ENCODE measurements at regions of chr1 and their contacts with region 1.

Region 1: DNA sequence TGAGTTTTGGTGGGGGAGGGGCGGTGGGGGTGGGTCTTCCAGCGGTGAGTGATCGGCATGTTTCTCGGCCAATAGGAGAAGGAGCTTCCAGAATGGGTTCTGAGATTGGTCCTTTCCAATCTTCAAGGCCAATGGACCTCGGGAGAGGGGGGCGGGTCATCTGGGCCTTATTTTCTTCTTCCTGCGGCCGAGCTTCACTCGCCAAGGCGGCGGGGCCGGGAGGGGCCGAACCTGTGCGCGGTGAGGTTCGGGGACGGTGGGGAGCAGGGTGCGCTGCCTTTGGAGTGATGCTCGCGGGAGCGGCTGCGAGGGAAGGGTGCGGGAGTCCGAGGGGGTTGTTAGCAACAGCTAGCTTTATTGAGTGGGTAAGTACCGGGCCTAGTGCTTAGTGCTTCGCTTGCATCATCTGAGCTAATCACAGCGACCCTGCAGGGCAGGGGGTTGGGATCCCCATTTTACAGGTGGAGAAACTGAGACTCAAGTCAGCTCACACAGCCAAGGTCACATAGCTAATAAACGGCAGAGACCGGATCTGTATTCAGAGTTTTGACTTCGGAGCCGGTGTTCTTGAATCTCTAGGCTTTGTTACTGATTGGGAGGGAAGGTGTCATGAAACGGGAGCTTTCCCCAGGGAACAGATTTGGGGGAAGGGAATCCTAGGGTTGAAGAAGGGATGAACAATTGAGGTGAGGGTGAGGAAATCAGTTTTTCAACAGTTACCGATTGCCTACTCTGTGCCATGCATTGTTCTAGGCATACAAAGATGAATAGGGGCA is 549 bp downstream of the KDM4A start:
- DNase-seq: peak; percentile 95
- ATAC-seq: peak; percentile 81
- H3K4me3 Mint-ChIP-seq: peak overlapping the region; percentile 89
- H3K27ac Mint-ChIP-seq: peak overlapping the region; percentile 97
- H3K4me1 Mint-ChIP-seq: peaks cover 31% of the 10 kb centered on the region
- H3K27me3 Mint-ChIP-seq: no peaks in the 10 kb centered on the region

Region 2: GRCh38 chr1:43454266-43455011 is 196.1 kb before region 1 on chr1:
- CTCF ChIA-PET with region 1: no interaction called
- POLR2A ChIA-PET with region 1: interaction called, 5 read pairs
- intact Hi-C with region 1: loop called in 1 of 2 experiments (anchors 5 kb)
- DNase-seq: peak; percentile 78
- ATAC-seq: peak; percentile 92
- H3K4me3 Mint-ChIP-seq: peak overlapping the region; percentile 79
- H3K27ac Mint-ChIP-seq: peak overlapping the region; percentile 79
- H3K4me1 Mint-ChIP-seq: peaks cover 17% of the 10 kb centered on the region
- H3K27me3 Mint-ChIP-seq: peaks cover 16% of the 10 kb centered on the region